Naive thymus-derived CD4-positive, alpha-beta T cell (primary cell): ENCODE measurements at regions of chr6 and their contacts with region 1.

Region 1: DNA sequence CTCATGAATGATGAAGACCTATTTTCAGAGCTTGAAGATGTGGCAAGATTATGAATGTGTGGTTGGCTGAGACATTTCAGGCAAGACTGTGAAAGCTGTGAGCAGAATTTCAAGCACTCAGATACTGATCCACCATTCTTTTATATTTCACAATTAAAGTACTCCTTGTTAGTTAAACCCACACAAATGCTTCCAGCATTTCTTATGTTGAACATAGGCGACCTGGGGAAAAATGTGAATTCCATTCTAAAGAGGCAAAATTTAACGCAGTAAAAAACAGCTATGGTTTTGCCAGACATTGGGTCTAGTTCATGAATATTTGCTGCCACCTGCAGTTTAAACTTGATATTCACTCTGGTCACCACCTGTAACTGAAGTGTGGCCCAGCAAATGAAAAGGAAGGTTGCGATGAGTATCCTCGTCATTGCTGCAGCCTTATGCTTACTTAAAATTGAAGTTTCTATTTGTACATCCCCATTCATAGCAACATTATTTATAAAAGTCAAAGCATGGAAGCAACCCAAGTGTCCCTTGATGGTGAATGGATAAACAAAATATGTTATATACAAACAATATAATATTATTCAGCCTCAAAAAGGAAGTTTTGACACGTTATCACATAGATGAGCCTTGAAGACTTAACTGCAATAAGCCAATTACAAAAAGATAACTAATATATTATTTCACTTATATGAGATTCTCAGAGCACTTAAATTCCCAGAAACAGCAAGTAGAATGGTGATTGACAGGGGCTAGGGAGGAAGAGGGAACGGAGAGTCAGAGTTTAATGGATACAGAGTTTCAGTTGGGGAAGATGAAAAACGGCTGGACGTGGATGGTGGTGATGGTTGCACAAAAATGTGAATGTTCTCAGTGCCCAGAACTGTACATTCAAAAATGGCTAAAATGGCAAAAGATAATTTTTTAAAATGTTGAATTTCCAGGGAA is 32.4 kb upstream of the FAM184A start:
- DNase-seq: peak in 7 of 9 donors; percentile 47 to 76 (median 73)
- ATAC-seq: peak; percentile 85
- H3K4me3 ChIP-seq: no peak overlapping the region
- H3K4me3 Mint-ChIP-seq: peak overlapping the region in 4 of 10 donors; percentile 34 to 61 (median 52)
- H3K27ac ChIP-seq: no peak overlapping the region
- H3K27ac Mint-ChIP-seq: peak overlapping the region in 1 of 9 donors; percentile 21
- H3K4me1 ChIP-seq: peaks cover 0 to 8% of the 10 kb centered on the region in 2 donors
- H3K4me1 Mint-ChIP-seq: peaks cover 2 to 22% (median 13%) of the 10 kb centered on the region in 7 donors
- H3K27me3 ChIP-seq: no peaks in the 10 kb centered on the region
- H3K27me3 Mint-ChIP-seq: peaks cover 0 to 4% (median 0%) of the 10 kb centered on the region in 5 donors

Region 2: DNA sequence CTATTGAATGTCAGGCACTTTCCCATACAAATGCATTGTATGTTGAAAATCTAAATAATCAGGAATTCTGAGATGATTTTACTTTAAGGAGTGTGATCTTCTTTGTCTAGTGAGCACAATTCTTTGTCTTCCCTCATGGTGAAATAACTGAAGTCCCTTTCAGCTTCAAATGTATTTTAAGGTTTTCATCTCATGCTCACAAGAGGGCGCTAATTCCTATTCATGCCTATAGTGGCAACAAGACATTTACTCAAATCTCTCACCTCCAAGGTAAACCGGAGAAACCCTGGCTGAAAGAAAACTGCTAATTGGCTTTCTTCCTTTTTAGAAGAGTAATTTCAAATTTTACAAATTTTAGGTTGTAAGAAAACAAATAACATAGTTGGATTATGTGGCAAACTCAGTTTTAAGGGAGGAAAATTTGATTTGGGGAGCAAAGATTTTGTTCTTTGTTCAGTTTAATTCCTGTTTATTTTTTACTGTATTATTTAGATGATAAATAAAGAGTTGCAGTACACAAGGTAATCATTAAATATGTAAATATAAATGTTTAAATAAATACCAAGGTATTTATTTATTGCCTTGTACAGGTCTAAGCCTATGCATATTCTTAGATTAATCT is 1134.7 kb before region 1 on chr6:
- CTCF ChIA-PET with region 1: no interaction called
- POLR2A ChIA-PET with region 1: no interaction called
- intact Hi-C with region 1: loop called (anchors 1 kb)
- DNase-seq: peak in 6 of 9 donors; percentile 18 to 42 (median 24)
- ATAC-seq: no peak
- H3K4me3 ChIP-seq: no peak overlapping the region
- H3K4me3 Mint-ChIP-seq: no peak overlapping the region
- H3K27ac ChIP-seq: no peak overlapping the region
- H3K27ac Mint-ChIP-seq: no peak overlapping the region
- H3K4me1 ChIP-seq: no peaks in the 10 kb centered on the region
- H3K4me1 Mint-ChIP-seq: no peaks in the 10 kb centered on the region
- H3K27me3 ChIP-seq: no peaks in the 10 kb centered on the region
- H3K27me3 Mint-ChIP-seq: peaks cover 7 to 24% (median 16%) of the 10 kb centered on the region in 5 donors

Region 3: GRCh38 chr6:118618679-118619377 is 492.0 kb before region 1 on chr6:
- CTCF ChIA-PET with region 1: no interaction called
- POLR2A ChIA-PET with region 1: no interaction called
- intact Hi-C with region 1: loop called in 1 of 2 experiments (anchors 5 kb)
- DNase-seq: peak; percentile 36 to 70 (median 55)
- ATAC-seq: peak; percentile 92
- H3K4me3 ChIP-seq: no peak overlapping the region
- H3K4me3 Mint-ChIP-seq: peak overlapping the region in 3 of 10 donors; percentile 2 to 52 (median 46)
- H3K27ac ChIP-seq: no peak overlapping the region
- H3K27ac Mint-ChIP-seq: peak overlapping the region; percentile 26 to 96 (median 79)
- H3K4me1 ChIP-seq: peaks cover 0 to 8% of the 10 kb centered on the region in 2 donors
- H3K4me1 Mint-ChIP-seq: peaks cover 21 to 86% (median 77%) of the 10 kb centered on the region in 7 donors
- H3K27me3 ChIP-seq: no peaks in the 10 kb centered on the region
- H3K27me3 Mint-ChIP-seq: no peaks in the 10 kb centered on the region

Region 4: DNA sequence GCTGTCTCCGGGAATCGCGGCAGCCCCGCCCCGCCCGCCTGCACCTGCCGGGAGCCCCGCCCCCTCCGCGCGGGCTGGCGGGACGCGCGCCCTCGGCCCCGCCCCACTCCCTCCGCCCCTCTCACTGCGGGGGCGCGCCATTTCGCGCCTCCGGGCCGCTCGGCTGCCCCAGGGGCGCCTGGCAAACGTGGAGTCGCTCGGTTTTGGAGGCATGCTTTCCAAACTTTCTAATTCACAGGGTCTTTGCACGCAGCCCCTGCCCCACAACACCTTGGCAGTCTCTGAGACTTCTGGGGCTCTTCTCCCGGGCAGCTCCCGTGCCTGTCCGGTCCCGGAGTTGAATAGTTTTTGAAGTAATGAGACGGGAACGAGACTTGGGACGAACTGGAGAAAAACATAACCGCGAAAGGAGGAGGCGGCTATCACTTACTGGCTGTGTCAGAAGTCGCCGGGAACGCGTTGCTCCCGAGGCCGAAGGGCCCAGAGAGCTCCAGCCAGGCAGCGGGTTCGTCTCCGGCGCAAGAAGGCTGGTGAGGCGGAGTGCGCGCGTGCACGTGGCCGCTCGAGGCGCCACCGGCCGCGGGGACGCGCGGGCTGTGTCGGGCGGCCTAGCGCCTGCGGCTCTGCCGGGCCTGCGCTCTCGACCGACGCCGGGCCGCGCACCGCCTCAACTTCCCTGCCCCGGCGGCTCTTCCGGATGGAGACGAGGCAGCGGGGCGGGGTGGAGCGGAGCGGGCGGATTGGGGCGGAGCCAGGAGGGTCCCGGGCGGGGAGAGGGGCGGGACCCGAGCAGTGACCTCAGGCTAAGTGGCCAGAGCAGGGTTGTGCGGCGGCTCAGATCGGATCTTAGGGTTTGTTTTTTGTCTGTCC is 176.2 kb before region 1 on chr6 and contains the start of gene MCM9:
- CTCF ChIA-PET with region 1: no interaction called
- POLR2A ChIA-PET with region 1: no interaction called
- intact Hi-C with region 1: loop called in 1 of 2 experiments (anchors 1 kb)
- DNase-seq: peak; percentile 77 to 93 (median 86)
- ATAC-seq: peak; percentile 92
- H3K4me3 ChIP-seq: peak within 1 kb of the TSS; percentile 98
- H3K4me3 Mint-ChIP-seq: peak within 1 kb of the TSS; percentile 86 to 96 (median 91)
- H3K27ac ChIP-seq: peak within 1 kb of the TSS; percentile 95
- H3K27ac Mint-ChIP-seq: peak within 1 kb of the TSS; percentile 86 to 95 (median 93)
- H3K4me1 ChIP-seq: peaks cover 4 to 8% of the 10 kb centered on the region in 2 donors
- H3K4me1 Mint-ChIP-seq: peaks cover 22 to 47% (median 41%) of the 10 kb centered on the region in 7 donors
- H3K27me3 ChIP-seq: no peaks in the 10 kb centered on the region
- H3K27me3 Mint-ChIP-seq: no peaks in the 10 kb centered on the region
- total RNA-seq, gene MCM9: 21.8 to 33.7 (median 31.1) TPM

Region 5: DNA sequence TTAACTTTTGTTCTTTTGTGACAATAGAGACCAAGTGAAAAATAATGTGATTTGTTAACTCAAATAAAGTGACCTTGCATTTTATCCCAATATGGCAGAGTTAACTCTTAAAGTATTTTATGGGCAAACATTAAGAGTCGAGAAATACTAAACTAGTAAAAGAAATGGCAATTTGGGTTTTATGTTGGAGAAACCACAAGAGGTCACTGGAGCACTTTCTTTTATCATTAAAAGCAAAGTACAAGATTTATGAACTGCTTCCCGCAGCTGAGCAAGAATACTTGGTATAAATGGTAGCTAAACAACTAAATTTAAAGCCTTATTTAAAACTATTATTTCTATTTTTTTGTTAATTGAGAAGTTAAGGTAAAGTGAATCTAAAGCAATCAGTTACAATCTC is 142.5 kb before region 1 on chr6:
- CTCF ChIA-PET with region 1: interaction called, 172 read pairs
- POLR2A ChIA-PET with region 1: interaction called, 10 read pairs
- intact Hi-C with region 1: loop called (anchors 1 kb)
- DNase-seq: peak in 6 of 9 donors; percentile 8 to 35 (median 24)
- ATAC-seq: no peak
- H3K4me3 ChIP-seq: no peak overlapping the region
- H3K4me3 Mint-ChIP-seq: no peak overlapping the region
- H3K27ac ChIP-seq: no peak overlapping the region
- H3K27ac Mint-ChIP-seq: no peak overlapping the region
- H3K4me1 ChIP-seq: no peaks in the 10 kb centered on the region
- H3K4me1 Mint-ChIP-seq: peaks cover 0 to 4% (median 0%) of the 10 kb centered on the region in 7 donors
- H3K27me3 ChIP-seq: no peaks in the 10 kb centered on the region
- H3K27me3 Mint-ChIP-seq: no peaks in the 10 kb centered on the region

Region 6: DNA sequence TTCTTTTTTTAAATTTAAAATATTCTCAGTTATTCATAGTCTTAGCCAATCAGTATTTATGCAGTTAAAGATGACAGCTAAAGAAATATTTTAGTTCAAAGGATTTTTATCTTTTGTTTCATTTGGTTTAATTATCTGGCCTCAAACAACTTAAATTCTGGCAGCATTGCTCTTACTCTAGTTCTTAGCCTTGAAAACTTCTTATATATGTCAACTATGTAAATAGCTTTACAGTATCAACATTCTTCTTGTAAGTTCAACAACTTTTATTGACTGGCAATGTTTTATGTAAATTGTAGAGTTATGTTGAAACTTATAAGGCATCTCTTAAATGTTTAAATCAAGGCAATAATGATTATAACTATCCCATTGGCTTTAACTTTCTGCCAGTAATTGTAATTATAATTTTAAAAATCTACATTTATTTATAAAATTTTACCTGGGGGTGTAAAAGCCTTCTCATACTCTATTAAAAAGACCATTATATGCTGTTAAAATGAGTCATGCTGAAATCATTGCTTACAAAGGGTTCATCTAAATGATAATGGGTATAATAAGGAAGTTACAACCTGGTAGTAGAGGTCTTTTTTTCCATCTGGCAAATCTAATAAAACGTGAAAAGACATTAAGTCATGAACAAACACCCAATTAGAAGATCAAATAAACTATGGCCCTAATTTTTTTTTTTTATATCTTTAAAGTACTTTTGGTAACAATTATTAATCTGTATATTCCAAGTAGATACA is 13.4 kb after region 1 on chr6:
- CTCF ChIA-PET with region 1: interaction called, 12 read pairs
- POLR2A ChIA-PET with region 1: no interaction called
- intact Hi-C with region 1: no loop called
- DNase-seq: no peak
- ATAC-seq: no peak
- H3K4me3 ChIP-seq: no peak overlapping the region
- H3K4me3 Mint-ChIP-seq: no peak overlapping the region
- H3K27ac ChIP-seq: no peak overlapping the region
- H3K27ac Mint-ChIP-seq: no peak overlapping the region
- H3K4me1 ChIP-seq: peaks cover 0 to 3% of the 10 kb centered on the region in 2 donors
- H3K4me1 Mint-ChIP-seq: peaks cover 0 to 5% (median 0%) of the 10 kb centered on the region in 7 donors
- H3K27me3 ChIP-seq: no peaks in the 10 kb centered on the region
- H3K27me3 Mint-ChIP-seq: peaks cover 0 to 17% (median 0%) of the 10 kb centered on the region in 5 donors